ENCODE measurements at regions of chr1 and their contacts with region 1.

Region 1: DNA sequence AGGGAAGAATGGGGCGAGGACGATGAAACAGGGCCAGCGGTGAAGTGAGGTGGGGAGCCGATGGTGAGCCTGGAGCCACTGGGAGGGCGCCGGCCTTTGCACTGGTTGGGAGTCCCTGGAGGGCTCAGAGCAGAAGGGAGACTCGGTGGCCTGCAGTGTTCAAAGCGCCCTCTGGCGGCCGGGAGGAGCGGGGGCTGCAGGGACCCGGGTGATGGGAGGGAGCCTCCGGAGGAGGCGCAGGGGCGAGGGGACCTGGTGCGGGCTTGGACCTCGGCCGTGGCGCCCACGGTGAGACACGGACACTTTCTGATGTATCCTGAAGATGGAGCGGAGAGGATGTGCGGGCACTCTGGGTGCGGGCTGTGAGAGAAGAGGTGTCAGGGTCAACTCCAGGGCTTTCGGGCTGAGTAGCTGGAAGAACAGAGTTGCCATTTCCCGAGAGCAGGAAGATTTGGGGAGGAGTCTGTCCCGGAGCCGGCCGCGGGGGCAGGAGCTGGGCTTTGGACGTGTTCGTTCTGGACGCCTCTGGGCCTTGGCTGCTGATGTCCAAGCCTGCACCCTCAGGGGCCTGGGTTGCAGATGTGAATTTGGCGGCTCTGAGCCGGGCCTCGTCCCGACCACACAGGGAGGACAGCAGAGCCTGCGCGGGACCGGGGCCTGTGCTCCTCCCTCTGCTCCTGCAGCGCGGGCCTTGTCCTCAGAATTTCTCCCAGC is 29.7 kb downstream of the HEYL start:
- DNase-seq: peak; percentile 65
- H3K4me3 ChIP-seq: no peak overlapping the region
- H3K27ac ChIP-seq: no peak overlapping the region
- H3K4me1 ChIP-seq: no peaks in the 10 kb centered on the region; a peak in 1 of 4 replicates
- H3K27me3 ChIP-seq: no peaks in the 10 kb centered on the region
- CTCF ChIP-seq: peak; percentile 52
- EP300 ChIP-seq: no peak
- RAD21 ChIP-seq: no peak

Region 2: GRCh38 chr1:39632682-39633417 is 23.1 kb after region 1 on chr1:
- CTCF ChIA-PET with region 1: interaction called, 22 read pairs
- POLR2A ChIA-PET with region 1: no interaction called
- DNase-seq: no peak
- H3K4me3 ChIP-seq: no peak overlapping the region
- H3K27ac ChIP-seq: peak overlapping the region in 1 of 2 experiments; percentile 55; a peak in 2 of 4 replicates
- H3K4me1 ChIP-seq: peaks cover 0 to 24% of the 10 kb centered on the region in 2 experiments; a peak in 2 of 4 replicates
- H3K27me3 ChIP-seq: no peaks in the 10 kb centered on the region; the same call in 1 of the 2 replicates
- CTCF ChIP-seq: no peak
- EP300 ChIP-seq: no peak
- RAD21 ChIP-seq: no peak

Region 3: GRCh38 chr1:39672551-39672947 is 62.8 kb after region 1 on chr1:
- CTCF ChIA-PET with region 1: interaction called, 79 read pairs
- POLR2A ChIA-PET with region 1: interaction called, 5 read pairs
- DNase-seq: peak; percentile 77
- H3K4me3 ChIP-seq: peak overlapping the region; percentile 57 to 63
- H3K27ac ChIP-seq: peak overlapping the region in 1 of 2 experiments; percentile 87; a peak in 2 of 4 replicates
- H3K4me1 ChIP-seq: peaks cover 0 to 27% of the 10 kb centered on the region in 2 experiments; a peak in 1 of 4 replicates
- H3K27me3 ChIP-seq: peaks cover 44% of the 10 kb centered on the region
- CTCF ChIP-seq: peak; percentile 72
- EP300 ChIP-seq: no peak
- RAD21 ChIP-seq: peak; percentile 44

Region 4: DNA sequence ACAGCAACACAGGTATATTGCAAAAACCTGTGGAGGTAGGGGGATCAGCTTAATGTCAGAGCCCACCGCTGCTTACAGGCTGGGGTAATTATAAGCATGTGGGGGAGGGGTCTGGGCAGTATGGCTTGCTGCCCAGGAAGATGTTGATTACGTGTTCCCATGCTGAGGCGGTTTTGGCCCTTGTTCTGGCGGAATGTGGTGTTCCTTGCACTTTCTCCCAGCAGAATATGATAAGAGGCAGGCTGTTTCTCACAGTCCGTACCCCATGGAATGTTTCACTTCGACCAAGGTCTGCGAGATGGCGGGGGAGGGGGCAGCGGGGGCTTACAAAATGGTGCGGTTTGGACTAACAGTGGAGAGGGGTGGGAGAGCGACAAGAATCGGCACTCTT is 91.3 kb after region 1 on chr1:
- CTCF ChIA-PET with region 1: interaction called, 15 read pairs
- POLR2A ChIA-PET with region 1: no interaction called
- DNase-seq: no peak
- H3K4me3 ChIP-seq: no peak overlapping the region
- H3K27ac ChIP-seq: no peak overlapping the region
- H3K4me1 ChIP-seq: peaks cover 0 to 17% of the 10 kb centered on the region in 2 experiments; a peak in 1 of 4 replicates
- H3K27me3 ChIP-seq: peaks cover 17% of the 10 kb centered on the region; the same call in 1 of the 2 replicates
- CTCF ChIP-seq: no peak
- EP300 ChIP-seq: no peak
- RAD21 ChIP-seq: no peak

Region 5: DNA sequence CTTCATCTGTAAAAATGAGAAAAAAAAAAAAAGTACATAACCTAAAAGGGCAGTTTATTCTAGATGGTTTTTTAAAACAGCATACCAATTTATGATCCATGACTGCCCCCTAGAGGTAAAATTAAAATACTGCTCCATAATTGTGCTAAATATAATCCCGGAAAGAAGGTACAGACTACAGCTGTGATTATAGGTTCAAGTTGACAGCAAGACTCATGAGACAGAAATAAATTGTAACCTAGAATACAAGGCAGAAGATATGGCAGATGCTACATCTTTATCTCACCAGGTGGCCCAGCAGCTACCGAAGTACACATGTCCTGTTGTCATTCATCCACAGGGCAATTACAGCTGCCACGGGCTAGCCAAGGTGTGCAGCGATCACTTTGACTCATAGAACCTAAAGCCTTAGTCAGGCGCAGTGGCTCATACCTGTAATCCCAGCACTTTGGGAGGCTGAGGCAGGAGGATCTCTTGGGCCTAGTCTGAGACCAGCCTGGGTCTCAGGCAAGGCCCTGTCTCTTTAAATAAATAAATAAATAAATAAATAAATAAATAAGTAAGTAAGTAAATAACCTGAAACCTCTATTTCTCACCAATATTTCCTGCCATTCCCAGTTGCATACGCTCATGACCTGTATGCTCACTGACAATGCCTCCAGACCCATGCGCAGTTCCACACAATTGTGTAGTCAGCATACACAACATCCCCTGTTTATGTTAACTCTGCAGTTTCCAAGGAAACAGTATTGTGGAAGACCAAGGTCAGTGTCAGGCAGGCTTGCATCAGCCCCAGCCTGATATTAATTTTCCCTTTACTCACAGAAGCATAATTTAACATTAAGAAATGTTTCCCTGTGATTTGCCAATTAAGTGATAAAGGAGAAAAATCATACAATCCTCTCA is 110.6 kb after region 1 on chr1:
- CTCF ChIA-PET with region 1: interaction called, 49 read pairs
- POLR2A ChIA-PET with region 1: interaction called, 3 read pairs
- DNase-seq: peak; percentile 48
- H3K4me3 ChIP-seq: no peak overlapping the region; a peak in 1 of 4 replicates
- H3K27ac ChIP-seq: no peak overlapping the region
- H3K4me1 ChIP-seq: peaks cover 0 to 2% of the 10 kb centered on the region in 2 experiments; a peak in 1 of 4 replicates
- H3K27me3 ChIP-seq: peaks cover 10% of the 10 kb centered on the region; the same call in 1 of the 2 replicates
- CTCF ChIP-seq: peak; percentile 84
- EP300 ChIP-seq: no peak
- RAD21 ChIP-seq: peak; percentile 88